PC-9 (cell line): ENCODE measurements at regions of chr3 and their contacts with region 1.

Region 1: GRCh38 chr3:150653110-150653561 is 50.0 kb downstream of the SELENOT start:
- DNase-seq: no peak
- H3K4me3 ChIP-seq: no peak overlapping the region
- H3K27ac ChIP-seq: no peak overlapping the region
- H3K4me1 ChIP-seq: no peaks in the 10 kb centered on the region
- H3K27me3 ChIP-seq: no peaks in the 10 kb centered on the region
- CTCF ChIP-seq: no peak

Region 2: GRCh38 chr3:150210461-150211110 is 442.6 kb before region 1 on chr3:
- CTCF ChIA-PET with region 1: no interaction called
- POLR2A ChIA-PET with region 1: no interaction called
- intact Hi-C with region 1: no loop called
- DNase-seq: no peak
- H3K4me3 ChIP-seq: no peak overlapping the region
- H3K27ac ChIP-seq: no peak overlapping the region
- H3K4me1 ChIP-seq: no peaks in the 10 kb centered on the region; the same call in 1 of the 2 replicates
- H3K27me3 ChIP-seq: no peaks in the 10 kb centered on the region
- CTCF ChIP-seq: no peak

Region 3: DNA sequence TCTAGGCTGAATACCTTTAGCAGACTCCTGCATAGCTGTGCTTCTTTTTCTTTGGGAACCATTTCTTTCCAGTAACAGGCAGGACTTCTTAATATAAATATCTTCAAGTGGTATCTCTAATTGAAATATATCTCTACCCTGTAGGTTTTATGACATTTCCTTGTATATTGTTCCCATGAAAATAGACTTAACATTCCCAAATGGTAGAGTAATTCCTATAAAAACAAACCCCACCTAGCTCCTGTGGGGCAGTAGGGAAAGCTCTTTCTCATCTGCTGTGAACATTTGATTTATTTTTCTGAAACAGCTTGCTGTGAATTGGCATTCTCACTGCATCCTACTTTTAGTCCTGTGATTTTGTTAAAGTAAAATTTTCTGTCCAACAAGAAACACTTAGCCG is 29.2 kb before region 1 on chr3:
- CTCF ChIA-PET with region 1: interaction called, 18 read pairs
- POLR2A ChIA-PET with region 1: interaction called, 4 read pairs
- intact Hi-C with region 1: no loop called
- DNase-seq: no peak
- H3K4me3 ChIP-seq: no peak overlapping the region
- H3K27ac ChIP-seq: no peak overlapping the region
- H3K4me1 ChIP-seq: no peaks in the 10 kb centered on the region
- H3K27me3 ChIP-seq: no peaks in the 10 kb centered on the region
- CTCF ChIP-seq: no peak

Region 4: GRCh38 chr3:150639262-150639661 is 13.9 kb before region 1 on chr3:
- CTCF ChIA-PET with region 1: interaction called, 17 read pairs
- POLR2A ChIA-PET with region 1: no interaction called
- intact Hi-C with region 1: no loop called
- DNase-seq: no peak
- H3K4me3 ChIP-seq: no peak overlapping the region
- H3K27ac ChIP-seq: no peak overlapping the region
- H3K4me1 ChIP-seq: no peaks in the 10 kb centered on the region
- H3K27me3 ChIP-seq: no peaks in the 10 kb centered on the region
- CTCF ChIP-seq: no peak

Region 5: DNA sequence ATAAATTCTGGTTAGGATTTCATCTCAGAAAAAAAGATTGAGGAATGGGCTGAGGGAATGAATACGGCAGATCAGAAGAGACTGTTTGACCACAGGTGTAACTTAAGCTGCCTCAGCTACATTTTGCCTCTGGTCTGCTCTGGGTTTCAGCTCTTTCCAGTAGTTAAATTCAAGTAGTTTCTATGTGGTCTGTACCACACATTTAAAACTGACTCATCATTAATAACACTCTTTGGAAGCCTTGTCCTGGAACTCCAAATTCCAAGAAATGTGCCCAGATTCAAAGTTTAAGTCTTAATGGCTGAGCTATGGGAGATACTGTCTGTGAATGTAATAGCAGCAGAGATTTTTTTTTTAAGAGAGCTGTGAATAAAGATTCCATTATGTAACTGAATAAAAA is 940.8 kb after region 1 on chr3:
- CTCF ChIA-PET with region 1: no interaction called
- POLR2A ChIA-PET with region 1: no interaction called
- intact Hi-C with region 1: no loop called
- DNase-seq: no peak
- H3K4me3 ChIP-seq: no peak overlapping the region
- H3K27ac ChIP-seq: no peak overlapping the region
- H3K4me1 ChIP-seq: no peaks in the 10 kb centered on the region
- H3K27me3 ChIP-seq: no peaks in the 10 kb centered on the region
- CTCF ChIP-seq: no peak